Activated naive CD4-positive, alpha-beta T cell treated with anti-CD3 and anti-CD28 coated beads for 36 hours (primary cell): ENCODE measurements at regions of chr14 and their contacts with region 1.

Region 1: GRCh38 chr14:64434528-64434927 is 30.8 kb upstream of the AKAP5 start:
- DNase-seq: no peak
- H3K4me3 Mint-ChIP-seq: no peak overlapping the region
- H3K27ac Mint-ChIP-seq: no peak overlapping the region
- H3K4me1 Mint-ChIP-seq: peaks cover 4% of the 10 kb centered on the region
- H3K27me3 Mint-ChIP-seq: no peaks in the 10 kb centered on the region

Region 2: DNA sequence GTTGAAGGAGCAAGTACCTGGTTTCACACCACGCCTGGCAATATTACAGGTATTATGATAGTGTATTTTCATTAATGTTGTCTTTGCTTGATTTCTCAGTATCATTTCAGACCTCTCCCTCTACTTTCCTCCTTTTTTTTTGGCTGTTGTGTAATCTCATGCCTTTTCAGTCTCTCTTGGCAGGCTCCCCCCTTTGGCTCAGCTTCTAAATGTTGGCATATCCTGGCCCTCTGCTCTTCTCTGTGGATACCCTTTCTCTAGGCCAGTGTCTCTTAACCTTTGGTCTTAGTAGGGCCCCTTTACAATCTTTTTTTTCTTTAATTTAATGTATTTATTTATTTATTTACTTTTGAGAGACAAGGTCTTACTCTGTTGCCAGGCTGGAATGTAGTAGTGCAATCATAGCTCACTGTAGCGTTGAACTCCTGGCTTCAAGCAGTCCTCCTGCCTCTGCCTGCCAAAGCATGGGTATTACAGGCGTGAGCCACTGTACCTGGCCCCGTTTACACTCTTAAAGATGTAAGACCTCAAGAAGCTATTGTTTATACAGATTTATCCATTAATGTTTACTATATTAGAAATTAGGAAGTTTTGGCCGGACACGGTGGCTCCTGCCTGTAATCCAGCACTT is 33.6 kb before region 1 on chr14:
- CTCF ChIA-PET with region 1: interaction called, 10 read pairs
- intact Hi-C with region 1: no loop called
- DNase-seq: no peak
- H3K4me3 Mint-ChIP-seq: no peak overlapping the region
- H3K27ac Mint-ChIP-seq: no peak overlapping the region
- H3K4me1 Mint-ChIP-seq: peaks cover 2% of the 10 kb centered on the region
- H3K27me3 Mint-ChIP-seq: no peaks in the 10 kb centered on the region

Region 3: DNA sequence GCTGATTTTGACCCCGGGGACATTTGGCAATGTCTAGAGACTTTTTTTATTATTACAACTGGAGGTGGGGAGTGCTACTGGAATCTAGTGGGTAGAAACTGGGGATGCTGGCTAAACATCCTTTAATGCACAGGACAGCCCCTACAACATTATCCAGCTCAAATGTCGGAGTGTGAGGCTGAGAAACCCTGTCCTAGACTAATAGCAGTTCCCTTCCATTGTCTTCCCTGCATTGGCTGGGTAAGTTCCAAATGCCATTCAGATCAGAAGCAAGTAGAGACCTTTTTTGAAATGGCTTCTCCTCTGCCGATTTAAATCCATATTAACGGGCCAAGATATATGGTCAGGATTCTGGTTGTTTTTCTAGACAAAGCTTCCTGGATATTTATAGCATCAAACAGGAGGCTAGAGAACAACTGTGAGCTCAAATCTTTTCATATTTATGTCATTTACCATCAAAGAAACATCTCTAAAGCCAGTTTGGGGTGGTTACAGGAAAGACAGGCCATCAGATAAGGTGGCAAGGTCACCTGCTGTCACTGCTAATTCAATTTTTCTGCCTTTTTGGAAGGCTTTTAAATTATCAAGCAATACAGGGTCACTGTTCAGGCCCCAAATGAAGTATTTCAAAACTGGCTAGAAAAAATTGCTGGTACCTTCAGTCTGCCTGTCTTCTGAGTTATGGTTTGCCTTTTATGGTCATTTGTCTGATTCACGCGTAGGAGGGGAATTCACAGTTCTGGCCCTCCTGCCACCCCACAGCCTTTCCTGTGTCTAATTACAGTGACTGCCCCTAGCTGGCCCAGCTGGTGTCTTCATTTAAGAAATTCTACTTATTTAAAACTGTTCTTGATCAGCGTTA is 10.7 kb after region 1 on chr14:
- CTCF ChIA-PET with region 1: interaction called, 16 read pairs
- intact Hi-C with region 1: no loop called
- DNase-seq: peak; percentile 55
- H3K4me3 Mint-ChIP-seq: no peak overlapping the region
- H3K27ac Mint-ChIP-seq: peak overlapping the region; percentile 75
- H3K4me1 Mint-ChIP-seq: peaks cover 32% of the 10 kb centered on the region
- H3K27me3 Mint-ChIP-seq: no peaks in the 10 kb centered on the region

Region 4: DNA sequence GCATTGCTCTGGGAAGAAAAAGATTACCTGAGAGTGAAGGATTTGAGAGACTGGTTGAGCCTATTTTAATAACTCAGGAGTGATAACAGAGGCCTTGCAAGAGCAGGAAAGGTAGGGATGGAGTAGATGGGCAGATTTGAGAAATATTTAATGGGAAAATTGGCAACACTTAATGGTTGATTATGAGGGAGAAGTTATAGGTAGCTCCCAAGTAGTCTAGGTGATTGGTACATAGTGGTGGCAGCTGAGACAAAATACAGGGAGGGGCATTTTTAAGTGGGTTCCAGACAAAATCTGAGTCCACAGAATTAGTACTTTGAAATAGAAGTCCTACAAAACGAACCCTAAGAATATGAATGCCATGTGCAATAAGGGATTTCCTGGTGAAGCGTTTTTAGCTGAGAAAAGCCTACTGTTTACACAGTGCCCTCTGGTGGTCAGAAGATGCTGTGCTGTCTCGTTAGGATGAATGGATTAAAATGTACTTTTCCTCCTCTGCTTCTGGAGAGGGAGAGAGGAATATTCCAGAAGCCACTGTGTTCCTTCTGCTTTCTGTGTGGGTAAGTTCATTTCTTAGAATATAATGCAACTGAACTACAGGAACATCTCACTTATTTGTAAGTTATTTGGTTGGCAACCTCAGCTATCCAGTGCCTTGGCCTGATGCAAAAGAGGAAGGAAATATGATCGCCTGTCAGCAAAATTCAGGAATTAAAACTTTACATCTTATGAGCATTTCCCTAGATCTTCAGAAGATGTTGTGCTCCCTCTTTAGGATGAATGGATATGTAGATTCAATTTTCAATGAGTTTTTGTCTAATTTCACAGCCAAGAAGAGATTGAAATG is 76.5 kb after region 1 on chr14:
- CTCF ChIA-PET with region 1: interaction called, 34 read pairs
- intact Hi-C with region 1: loop called (anchors 1 kb)
- DNase-seq: peak; percentile 82
- H3K4me3 Mint-ChIP-seq: peak overlapping the region; percentile 34
- H3K27ac Mint-ChIP-seq: peak overlapping the region; percentile 57
- H3K4me1 Mint-ChIP-seq: peaks cover 75% of the 10 kb centered on the region
- H3K27me3 Mint-ChIP-seq: no peaks in the 10 kb centered on the region

Region 5: DNA sequence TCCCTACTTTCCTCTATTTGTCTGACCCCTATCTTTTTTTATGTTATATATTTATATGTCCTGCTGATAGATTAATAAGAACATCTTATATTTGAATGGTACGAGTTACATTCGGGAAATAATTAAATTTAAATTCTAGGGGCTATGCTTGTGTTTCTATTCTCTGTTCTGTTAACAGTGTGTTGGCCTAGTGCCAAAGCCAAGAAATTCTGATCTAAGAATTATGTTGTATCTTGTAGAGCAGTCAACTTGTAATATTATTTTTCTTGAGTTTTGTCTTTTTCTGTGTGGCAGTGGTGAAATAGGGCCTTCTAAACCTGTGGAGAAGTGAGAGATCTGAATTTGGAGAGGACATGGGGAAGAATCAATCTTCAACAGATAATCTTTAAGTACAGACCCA is 97.0 kb after region 1 on chr14:
- CTCF ChIA-PET with region 1: no interaction called
- intact Hi-C with region 1: no loop called
- DNase-seq: no peak
- H3K4me3 Mint-ChIP-seq: no peak overlapping the region
- H3K27ac Mint-ChIP-seq: no peak overlapping the region
- H3K4me1 Mint-ChIP-seq: peaks cover 7% of the 10 kb centered on the region
- H3K27me3 Mint-ChIP-seq: no peaks in the 10 kb centered on the region